Mammary epithelial cell (primary cell): ENCODE measurements at regions of chr12 and their contacts with region 1.

Region 1: GRCh38 chr12:25958428-25959070 is at the start of gene RASSF8:
- DNase-seq: peak; percentile 67
- H3K4me3 ChIP-seq: peak within 1 kb of the TSS; percentile 88 to 100 (median 88)
- H3K27ac ChIP-seq: peak within 1 kb of the TSS; percentile 94
- H3K4me1 ChIP-seq: peaks cover 6% of the 10 kb centered on the region
- H3K27me3 ChIP-seq: no peaks in the 10 kb centered on the region
- CTCF ChIP-seq: no peak
- total RNA-seq, gene RASSF8: 31.3 to 35.3 TPM

Region 2: GRCh38 chr12:25436203-25437030 is 522.1 kb before region 1 on chr12:
- CTCF ChIA-PET with region 1: interaction called, 3 read pairs
- dilution Hi-C with region 1: no loop called
- in situ Hi-C with region 1: no loop called
- intact Hi-C with region 1: loop called (anchors 2 kb)
- DNase-seq: peak; percentile 56
- H3K4me3 ChIP-seq: peak overlapping the region; percentile 3 to 46 (median 24)
- H3K27ac ChIP-seq: peak overlapping the region; percentile 41
- H3K4me1 ChIP-seq: peaks cover 21% of the 10 kb centered on the region
- H3K27me3 ChIP-seq: no peaks in the 10 kb centered on the region
- CTCF ChIP-seq: peak; percentile 80 to 85

Region 3: DNA sequence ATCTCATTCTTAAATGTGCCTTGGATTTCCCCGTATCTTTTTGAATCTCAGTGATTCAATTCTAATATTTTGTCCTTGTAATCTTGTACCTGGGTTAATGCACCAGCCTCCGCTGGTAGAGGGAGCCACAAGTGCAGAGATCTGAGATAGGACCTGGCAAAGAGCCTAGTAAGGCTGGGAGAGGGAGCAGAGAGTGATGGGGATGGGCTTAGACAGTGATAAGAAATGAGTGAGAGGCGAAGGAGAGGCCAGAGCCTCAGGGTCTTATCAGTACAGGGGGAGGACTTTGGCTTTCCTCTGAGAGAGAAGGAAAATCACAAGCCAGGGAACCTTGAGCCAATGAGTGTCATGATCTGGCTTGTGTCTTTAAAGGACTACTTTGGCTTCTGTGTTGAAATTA is 375.0 kb before region 1 on chr12:
- CTCF ChIA-PET with region 1: no interaction called
- dilution Hi-C with region 1: no loop called
- in situ Hi-C with region 1: no loop called
- intact Hi-C with region 1: loop called (anchors 1 kb)
- DNase-seq: no peak
- H3K4me3 ChIP-seq: no peak overlapping the region
- H3K27ac ChIP-seq: no peak overlapping the region
- H3K4me1 ChIP-seq: peaks cover 26% of the 10 kb centered on the region
- H3K27me3 ChIP-seq: no peaks in the 10 kb centered on the region
- CTCF ChIP-seq: peak in 1 of 2 donors; percentile 50

Region 4: DNA sequence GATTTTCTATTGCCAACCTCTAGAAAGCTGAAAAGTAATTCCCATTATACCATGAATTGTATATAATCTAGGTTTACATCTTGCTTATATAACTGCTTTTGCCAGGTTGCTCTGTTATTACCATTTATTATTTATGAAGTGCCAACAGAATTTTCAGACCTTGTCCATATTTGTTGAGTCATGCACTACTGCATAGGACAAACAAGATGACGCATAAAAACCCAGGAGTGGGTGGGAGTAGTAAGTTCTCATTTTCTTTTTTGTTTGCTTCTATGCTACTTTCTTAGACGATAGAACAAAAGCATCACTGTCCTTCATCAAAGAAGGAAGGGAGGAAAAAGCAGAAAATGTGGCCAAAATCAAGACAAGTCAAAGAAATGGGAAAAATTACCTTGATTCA is 119.1 kb before region 1 on chr12:
- CTCF ChIA-PET with region 1: no interaction called
- dilution Hi-C with region 1: no loop called
- in situ Hi-C with region 1: no loop called
- intact Hi-C with region 1: loop called (anchors 5 kb)
- DNase-seq: peak; percentile 73
- H3K4me3 ChIP-seq: no peak overlapping the region
- H3K27ac ChIP-seq: peak overlapping the region; percentile 19
- H3K4me1 ChIP-seq: no peaks in the 10 kb centered on the region
- H3K27me3 ChIP-seq: no peaks in the 10 kb centered on the region
- CTCF ChIP-seq: no peak

Region 5: GRCh38 chr12:26028953-26029735 is 70.6 kb after region 1 on chr12:
- CTCF ChIA-PET with region 1: no interaction called
- dilution Hi-C with region 1: loop called (anchors 5 kb)
- in situ Hi-C with region 1: no loop called
- intact Hi-C with region 1: loop called (anchors 2 kb)
- DNase-seq: peak; percentile 25
- H3K4me3 ChIP-seq: no peak overlapping the region
- H3K27ac ChIP-seq: no peak overlapping the region
- H3K4me1 ChIP-seq: no peaks in the 10 kb centered on the region
- H3K27me3 ChIP-seq: no peaks in the 10 kb centered on the region
- CTCF ChIP-seq: peak; percentile 77 to 82